ENCODE measurements at regions of chr14 and their contacts with region 1.

Region 1: DNA sequence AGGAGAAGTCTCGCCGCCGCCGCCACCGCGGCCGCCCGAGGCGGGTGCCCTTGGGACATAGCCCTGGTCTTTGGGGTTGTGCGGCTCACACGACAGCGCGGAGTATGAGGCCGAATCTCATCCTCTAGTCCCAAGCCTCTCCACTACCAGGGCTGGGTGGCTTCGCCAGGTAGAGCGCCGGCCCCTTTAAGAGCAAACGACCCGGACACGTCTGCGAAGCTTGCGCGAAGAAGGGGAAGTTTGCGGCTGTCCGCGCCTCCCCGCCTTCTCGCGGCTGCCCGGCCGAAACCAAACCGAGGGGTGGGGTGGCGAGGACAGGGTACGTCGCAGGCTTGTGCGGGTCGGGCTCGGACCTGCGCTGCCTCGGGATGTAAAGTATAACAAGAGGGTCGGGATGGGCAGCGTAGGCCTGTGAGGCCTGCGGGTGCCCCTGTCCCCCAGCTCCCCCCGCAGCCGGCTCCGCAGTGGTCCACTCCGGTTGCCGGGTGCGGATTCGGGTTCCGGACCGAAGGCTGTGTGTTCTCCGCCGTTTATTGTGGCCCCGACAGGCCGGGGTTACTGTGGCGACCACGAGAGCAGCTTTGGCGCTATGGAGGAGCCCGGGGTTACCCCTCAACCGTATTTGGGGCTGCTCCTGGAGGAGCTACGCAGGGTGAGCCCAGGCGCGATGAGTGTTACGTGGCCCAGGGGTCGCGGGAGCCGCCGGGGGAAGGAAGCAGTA is 33.3 kb downstream of the MIA2 start:
- DNase-seq: peak; percentile 85 to 87
- ATAC-seq: peak; percentile 94 to 97 (median 96)
- H3K4me3 ChIP-seq: peak overlapping the region; percentile 66 to 96 (median 88)
- H3K27ac ChIP-seq: peak overlapping the region; percentile 89 to 100 (median 98)
- H3K4me1 ChIP-seq: peaks cover 0 to 42% (median 28%) of the 10 kb centered on the region in 9 donors
- H3K27me3 ChIP-seq: no peaks in the 10 kb centered on the region
- CTCF ChIP-seq: no peak

Region 2: GRCh38 chr14:39114073-39114838 is 152.8 kb before region 1 on chr14 and contains the start of gene GEMIN2:
- intact Hi-C with region 1: loop called in 2 of 10 experiments (anchors 5 to 10 kb)
- DNase-seq: peak; percentile 92 to 93
- ATAC-seq: peak; percentile 99 to 100 (median 100)
- H3K4me3 ChIP-seq: peak within 1 kb of the TSS; percentile 57 to 91 (median 74)
- H3K27ac ChIP-seq: peak within 1 kb of the TSS in 9 of 10 donors; percentile 51 to 87 (median 77)
- H3K4me1 ChIP-seq: peaks cover 0 to 19% (median 13%) of the 10 kb centered on the region in 9 donors
- H3K27me3 ChIP-seq: no peaks in the 10 kb centered on the region
- CTCF ChIP-seq: no peak
- total RNA-seq, gene GEMIN2: 5.6 to 9.7 (median 7.9) TPM

Region 3: DNA sequence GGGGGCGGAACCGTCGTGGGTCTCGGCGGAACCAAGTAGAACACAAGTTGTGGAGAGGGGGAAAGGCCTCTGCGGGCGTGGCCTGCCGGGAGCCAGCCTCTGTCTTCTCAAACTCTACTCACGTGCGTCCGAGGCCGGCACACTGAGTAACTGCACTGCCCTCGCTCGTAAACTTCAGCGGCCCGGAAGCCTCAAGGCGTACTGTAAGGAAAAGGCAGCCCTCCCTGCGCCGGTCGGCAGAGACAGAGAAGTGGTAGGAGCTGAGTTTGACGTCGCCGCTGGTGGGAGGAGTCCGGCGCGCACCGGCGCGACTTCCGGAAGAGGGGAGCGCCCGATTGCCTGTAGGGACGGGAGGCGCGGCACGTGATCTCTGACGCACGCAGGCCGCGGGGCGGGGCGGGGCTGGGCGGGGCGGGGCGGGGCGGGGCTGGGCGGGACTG is 165.2 kb after region 1 on chr14 and contains the start of gene FBXO33:
- intact Hi-C with region 1: loop called in 5 of 10 experiments (anchors 2 to 10 kb)
- DNase-seq: peak; percentile 96 to 97
- ATAC-seq: peak; percentile 95 to 97 (median 95)
- H3K4me3 ChIP-seq: peak within 1 kb of the TSS; percentile 75 to 99 (median 96)
- H3K27ac ChIP-seq: peak within 1 kb of the TSS; percentile 94 to 100 (median 98)
- H3K4me1 ChIP-seq: peaks cover 0 to 46% (median 34%) of the 10 kb centered on the region in 9 donors
- H3K27me3 ChIP-seq: no peaks in the 10 kb centered on the region
- CTCF ChIP-seq: no peak
- total RNA-seq, gene FBXO33: 3.0 to 6.8 (median 5.1) TPM